ENCODE measurements at regions of chr12 and their contacts with region 1.

Region 1: GRCh38 chr12:4276524-4277204 is 3.1 kb downstream of the CCND2 start:
- DNase-seq: peak; percentile 76
- ATAC-seq: peak; percentile 13
- H3K4me3 Mint-ChIP-seq: peak overlapping the region; percentile 90
- H3K27ac Mint-ChIP-seq: peak overlapping the region; percentile 99
- H3K4me1 Mint-ChIP-seq: peaks cover 41% of the 10 kb centered on the region
- H3K27me3 Mint-ChIP-seq: no peaks in the 10 kb centered on the region

Region 2: DNA sequence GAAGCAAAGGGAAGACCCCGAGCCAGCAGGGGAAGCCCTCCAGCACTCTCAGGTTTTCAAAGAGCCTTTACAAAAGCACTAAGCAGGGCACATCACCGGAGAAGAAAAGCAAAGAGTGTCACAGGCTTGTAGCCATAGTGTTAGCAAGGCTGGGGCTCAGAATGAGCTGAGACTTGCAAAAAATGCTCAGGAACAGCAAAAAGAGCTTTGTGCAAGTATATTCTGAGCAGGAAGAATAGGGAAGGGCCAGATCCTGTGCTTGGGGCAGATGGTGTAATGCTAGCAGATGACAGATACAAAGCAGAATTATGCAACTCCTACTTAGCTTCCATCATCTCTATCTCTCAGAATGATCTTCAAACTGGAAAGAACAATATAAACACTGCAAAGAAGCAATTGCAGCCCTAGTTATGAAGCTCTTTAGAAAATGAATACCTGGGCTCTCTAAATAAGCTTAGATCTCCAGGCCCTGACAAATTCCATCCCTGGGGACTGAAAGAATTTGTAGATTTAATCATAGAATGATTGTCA is 379.8 kb before region 1 on chr12:
- POLR2A ChIA-PET with region 1: interaction called, 17 read pairs
- DNase-seq: no peak
- ATAC-seq: peak; percentile 54
- H3K4me3 Mint-ChIP-seq: peak overlapping the region; percentile 62
- H3K27ac Mint-ChIP-seq: peak overlapping the region; percentile 91
- H3K4me1 Mint-ChIP-seq: peaks cover 31% of the 10 kb centered on the region
- H3K27me3 Mint-ChIP-seq: no peaks in the 10 kb centered on the region

Region 3: GRCh38 chr12:3998968-3999826 is 277.5 kb before region 1 on chr12:
- POLR2A ChIA-PET with region 1: interaction called, 17 read pairs
- DNase-seq: no peak
- ATAC-seq: no peak
- H3K4me3 Mint-ChIP-seq: no peak overlapping the region
- H3K27ac Mint-ChIP-seq: no peak overlapping the region
- H3K4me1 Mint-ChIP-seq: peaks cover 24% of the 10 kb centered on the region
- H3K27me3 Mint-ChIP-seq: peaks cover 4% of the 10 kb centered on the region

Region 4: GRCh38 chr12:4118017-4118510 is 158.6 kb before region 1 on chr12:
- POLR2A ChIA-PET with region 1: interaction called, 102 read pairs
- DNase-seq: no peak
- ATAC-seq: peak; percentile 47
- H3K4me3 Mint-ChIP-seq: peak overlapping the region; percentile 69
- H3K27ac Mint-ChIP-seq: peak overlapping the region; percentile 91
- H3K4me1 Mint-ChIP-seq: peaks cover 66% of the 10 kb centered on the region
- H3K27me3 Mint-ChIP-seq: no peaks in the 10 kb centered on the region

Region 5: DNA sequence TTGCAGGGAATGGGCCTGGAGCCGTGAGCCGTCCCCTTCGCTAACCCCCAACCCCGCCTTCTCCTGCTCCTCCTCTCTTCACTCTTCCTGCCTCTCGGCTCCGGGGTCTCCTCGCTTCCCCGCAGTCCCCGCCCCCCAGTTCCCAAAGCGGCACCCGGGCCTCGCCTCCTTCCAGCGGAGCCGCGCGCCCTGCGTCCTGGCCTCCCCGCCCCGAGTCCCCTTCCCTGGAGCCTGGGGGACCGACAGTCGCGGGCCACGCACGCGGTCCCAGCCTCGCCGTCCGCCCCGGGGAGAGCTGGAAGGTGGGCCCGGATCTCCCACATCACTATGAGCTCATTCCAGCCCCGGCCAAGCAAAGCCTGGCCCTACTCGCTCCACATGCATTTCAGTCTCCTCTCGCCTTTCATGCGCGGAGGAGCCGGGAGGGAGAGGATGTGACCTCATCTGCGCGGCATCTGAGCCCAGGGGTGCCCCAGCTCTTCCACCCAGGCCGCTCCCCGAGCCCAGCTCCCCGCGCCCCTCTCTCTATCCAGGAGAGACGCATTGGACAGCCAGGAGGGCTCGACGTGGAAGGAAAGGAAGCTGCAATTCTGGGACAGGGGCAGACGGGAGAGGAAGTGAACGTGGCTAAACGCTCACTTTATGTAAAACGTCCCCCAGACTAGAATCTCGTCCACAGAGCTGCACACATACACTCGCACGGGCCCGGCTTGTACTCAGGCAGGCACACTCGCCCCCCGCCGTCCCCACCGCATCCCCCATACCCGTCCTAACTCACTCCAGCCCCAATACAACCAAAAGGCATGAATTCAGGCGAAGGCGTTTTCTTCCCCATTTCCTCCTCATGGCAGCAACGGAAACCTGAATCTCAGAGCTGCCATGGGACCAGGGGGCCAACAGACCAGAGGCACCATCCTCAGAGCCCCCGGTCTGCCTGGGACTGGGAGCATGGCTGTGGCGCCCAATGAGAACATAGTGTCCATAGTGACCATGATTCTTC is 111.8 kb before region 1 on chr12:
- POLR2A ChIA-PET with region 1: interaction called, 41 read pairs
- DNase-seq: peak; percentile 79
- ATAC-seq: peak; percentile 98
- H3K4me3 Mint-ChIP-seq: peak overlapping the region; percentile 82
- H3K27ac Mint-ChIP-seq: peak overlapping the region; percentile 90
- H3K4me1 Mint-ChIP-seq: peaks cover 35% of the 10 kb centered on the region
- H3K27me3 Mint-ChIP-seq: no peaks in the 10 kb centered on the region

Region 6: GRCh38 chr12:4293299-4293965 is 16.8 kb after region 1 on chr12:
- POLR2A ChIA-PET with region 1: interaction called, 22 read pairs
- DNase-seq: no peak
- ATAC-seq: peak; percentile 63
- H3K4me3 Mint-ChIP-seq: peak overlapping the region; percentile 73
- H3K27ac Mint-ChIP-seq: peak overlapping the region; percentile 92
- H3K4me1 Mint-ChIP-seq: peaks cover 63% of the 10 kb centered on the region
- H3K27me3 Mint-ChIP-seq: no peaks in the 10 kb centered on the region